ENCODE measurements at regions of chr17 and their contacts with region 1.

Region 1: GRCh38 chr17:7887482-7888183 is 956 bp upstream of the CHD3 start:
- DNase-seq: peak; percentile 75 to 96
- ATAC-seq: peak; percentile 71 to 86 (median 76)
- H3K4me3 ChIP-seq: peak overlapping the region; percentile 71
- H3K4me3 Mint-ChIP-seq: no peak overlapping the region
- H3K27ac ChIP-seq: peak overlapping the region; percentile 68
- H3K27ac Mint-ChIP-seq: no peak overlapping the region
- H3K4me1 ChIP-seq: peaks cover 43% of the 10 kb centered on the region
- H3K4me1 Mint-ChIP-seq: no peaks in the 10 kb centered on the region
- H3K27me3 ChIP-seq: no peaks in the 10 kb centered on the region
- H3K27me3 Mint-ChIP-seq: no peaks in the 10 kb centered on the region
- CTCF ChIP-seq: no peak

Region 2: GRCh38 chr17:7809086-7809790 is 78.4 kb before region 1 on chr17:
- intact Hi-C with region 1: no loop called
- DNase-seq: no peak
- ATAC-seq: no peak
- H3K4me3 ChIP-seq: no peak overlapping the region
- H3K4me3 Mint-ChIP-seq: no peak overlapping the region
- H3K27ac ChIP-seq: no peak overlapping the region
- H3K27ac Mint-ChIP-seq: no peak overlapping the region
- H3K4me1 ChIP-seq: no peaks in the 10 kb centered on the region
- H3K4me1 Mint-ChIP-seq: no peaks in the 10 kb centered on the region
- H3K27me3 ChIP-seq: no peaks in the 10 kb centered on the region
- H3K27me3 Mint-ChIP-seq: peaks cover 6 to 9% of the 10 kb centered on the region in 2 donors
- CTCF ChIP-seq: no peak

Region 3: DNA sequence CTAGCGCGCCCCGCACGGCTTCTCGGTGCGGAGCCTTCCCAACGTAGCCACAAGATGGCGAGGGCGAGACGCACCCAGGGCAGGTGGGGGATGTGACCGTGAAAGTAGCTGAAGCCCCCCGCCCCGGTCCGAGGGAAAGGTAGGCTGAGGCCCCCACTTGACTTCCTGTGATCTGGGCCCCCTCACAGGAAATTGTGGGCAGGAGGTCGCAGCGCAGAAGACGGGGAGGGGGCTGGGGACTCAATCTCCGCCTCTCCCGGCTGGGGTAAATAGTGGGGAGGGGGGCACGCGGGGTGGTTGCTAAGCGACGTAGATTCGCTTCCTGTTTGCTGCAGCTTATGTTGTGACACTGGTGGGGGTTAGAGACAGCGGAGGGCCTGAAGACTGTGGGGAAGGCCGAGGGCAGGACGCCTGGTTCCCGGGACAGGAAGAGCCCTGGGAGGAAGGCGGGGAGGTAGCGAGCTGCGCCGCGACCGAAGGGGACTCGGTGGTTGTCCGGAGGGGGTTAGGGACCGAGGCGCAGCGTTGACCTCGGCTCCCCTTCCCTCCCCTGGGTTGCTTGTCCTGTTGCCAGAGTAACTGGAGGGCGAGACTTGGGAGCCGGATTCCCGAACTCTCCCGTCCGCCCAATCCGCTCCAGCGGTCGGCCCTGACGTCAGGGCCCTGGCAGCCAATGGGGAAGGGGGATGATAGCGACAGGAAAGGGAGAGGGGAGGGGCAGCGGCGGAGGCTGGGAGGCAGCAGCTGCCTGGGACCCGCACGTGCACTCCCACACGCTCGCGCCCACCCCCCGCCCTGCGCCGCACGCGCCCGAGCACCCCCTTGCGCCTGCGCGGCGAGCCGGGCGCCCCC is 52.4 kb before region 1 on chr17:
- intact Hi-C with region 1: loop called (anchors 2 kb)
- DNase-seq: peak; percentile 79 to 97
- ATAC-seq: peak; percentile 49 to 71 (median 60)
- H3K4me3 ChIP-seq: peak overlapping the region; percentile 59
- H3K4me3 Mint-ChIP-seq: peak overlapping the region; percentile 94
- H3K27ac ChIP-seq: peak overlapping the region; percentile 98
- H3K27ac Mint-ChIP-seq: peak overlapping the region; percentile 97 to 100
- H3K4me1 ChIP-seq: peaks cover 50% of the 10 kb centered on the region
- H3K4me1 Mint-ChIP-seq: peaks cover 37 to 62% of the 10 kb centered on the region in 2 donors
- H3K27me3 ChIP-seq: no peaks in the 10 kb centered on the region
- H3K27me3 Mint-ChIP-seq: peaks cover 0 to 9% of the 10 kb centered on the region in 2 donors
- CTCF ChIP-seq: peak; percentile 74

Region 4: GRCh38 chr17:7856883-7857723 is 30.5 kb before region 1 on chr17 and contains the start of gene NAA38:
- intact Hi-C with region 1: loop called (anchors 1 kb)
- DNase-seq: peak; percentile 89 to 99
- ATAC-seq: peak; percentile 75 to 92 (median 82)
- H3K4me3 ChIP-seq: peak within 1 kb of the TSS; percentile 86
- H3K4me3 Mint-ChIP-seq: no peak within 1 kb of the TSS
- H3K27ac ChIP-seq: peak within 1 kb of the TSS; percentile 92
- H3K27ac Mint-ChIP-seq: no peak within 1 kb of the TSS
- H3K4me1 ChIP-seq: peaks cover 33% of the 10 kb centered on the region
- H3K4me1 Mint-ChIP-seq: peaks cover 5 to 9% of the 10 kb centered on the region in 2 donors
- H3K27me3 ChIP-seq: no peaks in the 10 kb centered on the region
- H3K27me3 Mint-ChIP-seq: no peaks in the 10 kb centered on the region
- CTCF ChIP-seq: no peak
- total RNA-seq, gene NAA38: 35.9 to 40.3 (median 37.3) TPM

Region 5: GRCh38 chr17:7931709-7932482 is 44.3 kb after region 1 on chr17 and contains the starts of genes CNTROB and TRAPPC1:
- intact Hi-C with region 1: loop called (anchors 5 kb)
- DNase-seq: peak; percentile 99 to 100
- ATAC-seq: peak; percentile 93 to 99 (median 96)
- H3K4me3 ChIP-seq: peak within 1 kb of the TSS; percentile 74
- H3K4me3 Mint-ChIP-seq: peak within 1 kb of the TSS; percentile 99
- H3K27ac ChIP-seq: peak within 1 kb of the TSS; percentile 79
- H3K27ac Mint-ChIP-seq: peak within 1 kb of the TSS; percentile 96 to 98
- H3K4me1 ChIP-seq: peaks cover 31% of the 10 kb centered on the region
- H3K4me1 Mint-ChIP-seq: peaks cover 36 to 56% of the 10 kb centered on the region in 2 donors
- H3K27me3 ChIP-seq: no peaks in the 10 kb centered on the region
- H3K27me3 Mint-ChIP-seq: no peaks in the 10 kb centered on the region
- CTCF ChIP-seq: no peak
- total RNA-seq, gene CNTROB: 36.3 to 49.8 (median 45.2) TPM
- total RNA-seq, gene TRAPPC1: 122 to 144 (median 135) TPM